ENCODE measurements at regions of chr1 and their contacts with region 1.

Region 1: DNA sequence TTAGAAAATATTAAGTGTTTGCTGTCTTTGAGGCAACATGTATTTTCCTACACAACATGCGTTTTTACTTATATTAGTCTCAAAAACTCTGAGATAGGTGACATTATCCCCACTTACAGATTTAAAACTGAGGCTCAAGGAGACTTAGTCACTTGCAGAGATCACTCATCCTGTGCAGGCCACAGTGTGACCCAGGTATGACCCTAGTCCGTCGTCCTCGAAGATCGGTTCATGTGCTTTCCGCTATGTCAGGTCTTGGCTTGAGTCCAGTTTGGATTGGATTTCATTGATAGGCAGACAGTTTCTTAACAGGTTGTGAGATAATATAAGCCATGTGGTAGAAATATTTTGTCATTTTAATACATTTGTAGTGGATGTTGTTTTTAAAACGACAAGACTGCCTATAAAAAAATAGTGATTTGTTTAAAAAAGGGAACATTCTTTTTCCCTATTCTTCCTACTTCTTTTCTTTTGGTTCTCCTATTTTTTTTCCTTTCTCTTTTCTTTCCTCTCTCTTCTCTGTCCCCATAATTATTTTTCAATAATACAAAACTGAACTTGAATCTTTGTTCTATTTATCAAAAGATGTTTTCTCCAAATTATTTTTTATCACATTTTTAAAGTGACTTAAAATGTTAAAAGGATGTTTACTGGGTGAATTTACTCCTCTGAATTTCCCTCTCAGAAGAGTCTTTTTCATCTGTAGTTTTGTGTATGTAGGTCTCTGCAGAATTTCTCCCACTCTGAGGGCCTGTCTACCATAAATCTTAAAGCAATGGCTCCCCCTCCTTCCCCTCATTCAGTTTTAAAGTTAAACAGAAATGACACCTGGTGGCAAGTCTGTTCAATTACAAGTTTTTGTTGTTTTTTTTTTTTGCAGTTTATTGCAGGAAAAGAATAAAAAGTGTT is 81.8 kb downstream of the PHTF1 start:
- DNase-seq: no peak
- H3K4me3 ChIP-seq: no peak overlapping the region
- H3K27ac ChIP-seq: no peak overlapping the region
- H3K4me1 ChIP-seq: peaks cover 0 to 12% (median 5%) of the 10 kb centered on the region in 4 donors
- H3K27me3 ChIP-seq: no peaks in the 10 kb centered on the region
- CTCF ChIP-seq: peak in 3 of 4 experiments; percentile 34 to 60 (median 50)
- EP300 ChIP-seq: no peak
- POLR2A ChIP-seq: no peak

Region 2: DNA sequence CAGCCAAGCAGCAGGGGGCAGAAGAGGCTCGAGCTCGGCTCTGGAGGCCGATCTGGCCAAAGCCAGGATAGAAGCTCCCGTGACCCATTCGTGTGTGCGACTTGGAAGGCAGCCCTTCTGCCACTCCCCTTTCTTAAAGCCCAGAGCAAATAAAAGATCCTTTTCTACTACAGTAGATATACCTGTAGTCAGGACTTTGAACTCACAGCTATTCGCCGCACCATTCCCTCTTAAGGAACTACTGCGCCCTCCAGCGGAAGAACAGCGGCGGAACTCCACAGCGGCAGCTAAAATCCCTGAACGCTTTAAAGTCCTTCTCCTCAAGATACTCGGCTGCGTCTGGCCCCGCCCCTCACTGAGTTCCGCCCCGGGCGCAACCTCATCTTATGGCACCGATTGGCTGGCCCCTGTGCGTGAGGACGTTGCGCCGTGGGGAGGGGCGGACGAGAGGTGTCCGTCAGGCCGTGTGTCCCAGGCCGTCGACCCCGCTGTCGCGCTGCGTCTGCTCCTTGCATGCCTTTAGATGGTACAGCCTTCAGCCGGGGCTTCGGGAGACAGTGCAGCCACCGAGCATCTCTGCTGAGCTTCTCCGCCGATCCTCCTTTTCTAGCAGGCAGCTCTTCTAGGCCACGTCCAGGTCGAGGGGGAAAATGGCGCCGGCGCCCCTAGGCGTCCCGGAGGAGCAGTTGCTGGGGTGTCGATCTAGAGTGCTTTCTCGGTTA is 604.6 kb before region 1 on chr1 and contains the start of gene LRIG2:
- intact Hi-C with region 1: loop called (anchors 5 kb)
- DNase-seq: peak; percentile 99
- H3K4me3 ChIP-seq: peak within 1 kb of the TSS; percentile 66 to 94 (median 80)
- H3K27ac ChIP-seq: peak within 1 kb of the TSS; percentile 92 to 98 (median 94)
- H3K4me1 ChIP-seq: peaks cover 0 to 39% (median 30%) of the 10 kb centered on the region in 4 donors
- H3K27me3 ChIP-seq: no peaks in the 10 kb centered on the region
- CTCF ChIP-seq: peak; percentile 80 to 95 (median 89)
- EP300 ChIP-seq: no peak
- POLR2A ChIP-seq: peak; percentile 85 to 96
- total RNA-seq, gene LRIG2: 14.1 to 24.2 (median 17.4) TPM

Region 3: DNA sequence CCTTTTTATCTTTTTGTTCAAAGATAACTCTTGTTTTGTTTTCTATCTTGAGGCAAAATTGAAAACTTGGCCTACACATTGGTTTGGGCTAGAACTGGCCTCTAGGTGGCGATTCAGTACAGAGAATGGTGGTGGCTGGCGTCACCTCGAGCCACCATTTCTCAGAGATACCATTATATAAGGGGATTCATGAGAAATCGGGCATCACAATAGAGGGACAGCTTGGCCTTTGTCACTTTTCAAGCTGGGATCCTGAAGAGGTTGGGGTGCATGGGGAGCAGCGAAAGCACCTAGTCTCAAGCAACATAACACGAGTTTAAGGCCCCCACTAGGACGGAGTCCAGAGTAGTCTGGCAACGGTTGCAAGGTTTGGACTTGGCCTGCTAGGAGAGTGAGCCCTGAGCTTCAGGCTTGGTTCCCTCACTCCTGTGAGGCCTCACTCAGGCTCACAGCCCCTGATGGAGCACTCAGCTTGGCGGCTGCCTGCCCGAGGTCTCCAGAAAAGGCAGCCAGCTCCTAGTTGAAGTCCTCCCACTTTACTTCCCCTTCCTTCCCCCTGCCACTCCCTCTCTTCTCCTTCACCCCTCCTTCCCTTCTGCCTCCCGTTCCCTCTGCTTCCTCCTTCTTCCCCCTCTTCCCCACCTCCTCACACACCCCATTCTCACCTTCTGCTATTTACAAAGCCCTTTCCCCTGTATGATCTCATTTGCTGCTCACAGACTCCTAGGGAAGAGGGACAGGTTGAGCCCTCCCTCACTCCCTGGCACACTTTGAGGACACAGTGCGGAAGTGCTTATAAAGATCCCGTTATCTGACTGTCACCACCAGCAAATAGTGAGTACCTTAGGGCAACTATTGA is 536.7 kb before region 1 on chr1:
- intact Hi-C with region 1: loop called (anchors 2 kb)
- DNase-seq: peak; percentile 80
- H3K4me3 ChIP-seq: peak overlapping the region in 2 of 4 donors; percentile 2 to 12
- H3K27ac ChIP-seq: no peak overlapping the region
- H3K4me1 ChIP-seq: peaks cover 0 to 42% (median 24%) of the 10 kb centered on the region in 4 donors
- H3K27me3 ChIP-seq: no peaks in the 10 kb centered on the region
- CTCF ChIP-seq: peak; percentile 73 to 82 (median 76)
- EP300 ChIP-seq: no peak
- POLR2A ChIP-seq: no peak